PC-3 (cell line): ENCODE measurements at regions of chr14 and their contacts with region 1.

Region 1: GRCh38 chr14:44732144-44732543 is 225.1 kb upstream of the FSCB start:
- DNase-seq: no peak
- ATAC-seq: no peak
- H3K4me3 ChIP-seq: no peak overlapping the region
- H3K27ac ChIP-seq: no peak overlapping the region
- H3K4me1 ChIP-seq: no peaks in the 10 kb centered on the region
- H3K27me3 ChIP-seq: no peaks in the 10 kb centered on the region
- CTCF ChIP-seq: no peak

Region 2: DNA sequence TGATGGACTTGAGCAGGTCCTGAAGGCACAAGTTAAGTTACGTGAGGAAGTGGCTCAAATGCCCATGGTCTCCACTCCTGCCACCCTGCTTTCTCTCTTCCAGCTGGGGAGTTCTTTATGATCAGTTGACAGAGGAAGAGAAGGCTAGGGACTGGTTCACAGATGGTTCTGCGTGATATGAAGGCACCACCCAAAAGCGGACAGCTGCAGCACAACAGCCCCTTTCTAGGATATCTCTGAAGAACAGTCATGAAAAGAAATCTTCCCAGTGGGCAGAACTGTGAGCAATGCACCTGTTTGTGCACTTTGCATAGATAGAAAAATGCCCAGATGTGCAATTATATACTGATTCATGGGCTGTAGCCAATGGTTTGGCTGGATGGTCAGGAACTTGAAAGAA is 62.6 kb before region 1 on chr14:
- CTCF ChIA-PET with region 1: no interaction called
- POLR2A ChIA-PET with region 1: no interaction called
- intact Hi-C with region 1: no loop called
- DNase-seq: no peak
- ATAC-seq: no peak
- H3K4me3 ChIP-seq: no peak overlapping the region
- H3K27ac ChIP-seq: no peak overlapping the region
- H3K4me1 ChIP-seq: no peaks in the 10 kb centered on the region
- H3K27me3 ChIP-seq: no peaks in the 10 kb centered on the region
- CTCF ChIP-seq: no peak

Region 3: DNA sequence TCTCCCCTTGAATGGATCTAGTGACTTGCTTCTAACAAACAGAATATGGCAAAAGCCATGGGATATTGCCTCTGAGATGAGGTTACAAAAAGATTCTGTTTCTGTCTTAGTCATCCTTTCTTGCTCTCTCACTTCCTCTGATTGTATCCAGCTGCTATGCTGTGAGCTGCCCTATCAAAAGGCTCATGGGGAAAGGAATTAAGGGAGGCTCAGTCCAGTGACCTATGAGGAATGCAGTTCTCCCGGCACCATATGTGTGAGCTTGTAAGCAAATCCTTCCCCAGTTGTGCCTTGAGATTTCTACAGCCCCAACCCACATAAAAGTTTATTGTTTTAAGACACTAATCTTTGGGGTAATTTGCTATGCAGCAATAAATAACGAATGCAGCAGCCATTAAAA is 46.5 kb after region 1 on chr14:
- CTCF ChIA-PET with region 1: no interaction called
- POLR2A ChIA-PET with region 1: no interaction called
- intact Hi-C with region 1: loop called (anchors 5 kb)
- DNase-seq: peak; percentile 55
- ATAC-seq: peak; percentile 62
- H3K4me3 ChIP-seq: no peak overlapping the region
- H3K27ac ChIP-seq: no peak overlapping the region
- H3K4me1 ChIP-seq: peaks cover 4% of the 10 kb centered on the region
- H3K27me3 ChIP-seq: no peaks in the 10 kb centered on the region
- CTCF ChIP-seq: no peak